Activated CD4-positive, alpha-beta T cell treated with anti-CD3 and anti-CD28 coated beads for 36 hours (primary cell): ENCODE measurements at regions of chr2 and their contacts with region 1.

Region 1: DNA sequence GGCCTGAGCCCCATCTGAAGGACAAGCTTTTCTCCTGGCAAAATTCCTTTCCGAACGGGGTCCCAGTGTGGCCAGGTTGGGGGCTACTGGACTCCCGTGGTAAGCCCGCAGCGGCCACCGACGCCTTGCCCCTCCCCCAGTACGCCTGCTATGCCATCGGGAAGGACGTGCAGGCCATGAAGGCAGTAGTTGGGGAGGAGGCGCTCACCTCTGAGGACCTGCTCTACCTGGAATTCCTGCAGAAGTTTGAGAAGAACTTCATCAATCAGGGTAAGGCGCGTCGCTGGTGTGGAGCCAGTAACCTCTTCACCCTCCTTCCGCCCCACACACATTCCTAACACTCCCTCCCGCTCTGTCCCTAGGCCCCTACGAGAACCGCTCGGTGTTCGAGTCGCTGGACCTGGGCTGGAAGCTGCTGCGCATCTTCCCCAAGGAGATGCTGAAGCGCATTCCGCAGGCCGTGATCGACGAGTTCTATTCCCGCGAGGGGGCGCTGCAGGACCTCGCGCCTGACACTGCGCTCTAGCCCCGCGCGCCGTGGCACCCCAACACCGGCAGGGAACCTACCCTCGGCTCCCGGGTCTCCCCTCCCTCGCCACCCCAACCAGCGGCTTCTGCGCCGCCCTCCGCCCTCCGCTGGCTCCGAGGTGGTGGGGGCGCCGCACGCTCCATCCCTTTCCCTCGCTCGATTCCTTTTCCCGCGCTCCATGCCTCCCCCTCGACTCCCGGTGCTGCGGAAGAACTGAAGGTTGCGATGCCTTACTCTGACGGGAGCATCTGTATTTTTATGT is 13.6 kb upstream of the ANKRD53 start:
- DNase-seq: peak; percentile 91
- ATAC-seq: peak; percentile 98
- H3K4me3 Mint-ChIP-seq: peak overlapping the region; percentile 77
- H3K27ac Mint-ChIP-seq: no peak overlapping the region
- H3K4me1 Mint-ChIP-seq: peaks cover 4% of the 10 kb centered on the region
- H3K27me3 Mint-ChIP-seq: peaks cover 16% of the 10 kb centered on the region

Region 2: GRCh38 chr2:70977605-70978205 is 12.9 kb after region 1 on chr2:
- CTCF ChIA-PET with region 1: interaction called, 35 read pairs
- POLR2A ChIA-PET with region 1: no interaction called
- intact Hi-C with region 1: loop called in 1 of 2 experiments (anchors 1 kb)
- DNase-seq: peak; percentile 60
- ATAC-seq: peak; percentile 56
- H3K4me3 Mint-ChIP-seq: peak overlapping the region; percentile 54
- H3K27ac Mint-ChIP-seq: peak overlapping the region; percentile 60
- H3K4me1 Mint-ChIP-seq: peaks cover 17% of the 10 kb centered on the region
- H3K27me3 Mint-ChIP-seq: no peaks in the 10 kb centered on the region

Region 3: DNA sequence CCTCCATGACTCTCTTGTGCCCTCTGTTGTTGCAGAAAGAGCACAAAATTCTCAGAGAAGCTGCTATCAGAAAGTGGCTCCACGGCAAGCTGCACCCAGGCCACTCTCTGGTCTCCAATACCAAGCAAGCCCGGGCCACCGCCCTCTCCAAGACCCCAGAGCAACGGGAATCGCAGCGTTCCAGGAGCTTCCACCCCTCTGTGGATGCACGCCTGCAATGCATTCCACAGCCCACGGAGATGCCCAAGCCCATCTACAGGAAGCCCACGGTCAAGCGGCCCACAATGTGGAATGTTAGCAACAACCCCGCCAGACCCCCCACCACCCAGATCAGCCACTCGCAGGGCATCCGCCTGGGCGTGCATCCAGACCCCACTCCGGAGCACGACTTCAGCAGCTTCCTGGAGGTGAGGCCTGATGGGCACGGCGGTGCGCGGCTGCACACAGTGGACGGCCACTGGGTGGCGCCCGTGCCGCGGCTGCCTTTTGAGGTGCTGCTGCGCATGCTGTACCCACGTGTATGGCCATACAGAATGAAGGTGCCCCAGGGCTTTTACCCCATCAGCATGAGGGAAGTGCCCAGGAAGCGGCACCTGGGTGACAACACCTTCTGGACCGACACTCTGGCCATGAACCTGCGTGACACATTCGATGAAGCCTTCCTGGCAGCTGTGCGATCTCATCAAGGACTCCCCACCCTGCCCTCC is 19.9 kb after region 1 on chr2:
- CTCF ChIA-PET with region 1: interaction called, 35 read pairs
- POLR2A ChIA-PET with region 1: no interaction called
- intact Hi-C with region 1: loop called in 1 of 2 experiments (anchors 2 kb)
- DNase-seq: peak; percentile 92
- ATAC-seq: peak; percentile 100
- H3K4me3 Mint-ChIP-seq: no peak overlapping the region
- H3K27ac Mint-ChIP-seq: no peak overlapping the region
- H3K4me1 Mint-ChIP-seq: peaks cover 12% of the 10 kb centered on the region
- H3K27me3 Mint-ChIP-seq: no peaks in the 10 kb centered on the region

Region 4: GRCh38 chr2:71000780-71001591 is 36.2 kb after region 1 on chr2:
- CTCF ChIA-PET with region 1: interaction called, 44 read pairs
- POLR2A ChIA-PET with region 1: no interaction called
- intact Hi-C with region 1: loop called (anchors 1 kb)
- DNase-seq: peak; percentile 91
- ATAC-seq: peak; percentile 97
- H3K4me3 Mint-ChIP-seq: peak overlapping the region; percentile 77
- H3K27ac Mint-ChIP-seq: peak overlapping the region; percentile 85
- H3K4me1 Mint-ChIP-seq: peaks cover 13% of the 10 kb centered on the region
- H3K27me3 Mint-ChIP-seq: no peaks in the 10 kb centered on the region

Region 5: DNA sequence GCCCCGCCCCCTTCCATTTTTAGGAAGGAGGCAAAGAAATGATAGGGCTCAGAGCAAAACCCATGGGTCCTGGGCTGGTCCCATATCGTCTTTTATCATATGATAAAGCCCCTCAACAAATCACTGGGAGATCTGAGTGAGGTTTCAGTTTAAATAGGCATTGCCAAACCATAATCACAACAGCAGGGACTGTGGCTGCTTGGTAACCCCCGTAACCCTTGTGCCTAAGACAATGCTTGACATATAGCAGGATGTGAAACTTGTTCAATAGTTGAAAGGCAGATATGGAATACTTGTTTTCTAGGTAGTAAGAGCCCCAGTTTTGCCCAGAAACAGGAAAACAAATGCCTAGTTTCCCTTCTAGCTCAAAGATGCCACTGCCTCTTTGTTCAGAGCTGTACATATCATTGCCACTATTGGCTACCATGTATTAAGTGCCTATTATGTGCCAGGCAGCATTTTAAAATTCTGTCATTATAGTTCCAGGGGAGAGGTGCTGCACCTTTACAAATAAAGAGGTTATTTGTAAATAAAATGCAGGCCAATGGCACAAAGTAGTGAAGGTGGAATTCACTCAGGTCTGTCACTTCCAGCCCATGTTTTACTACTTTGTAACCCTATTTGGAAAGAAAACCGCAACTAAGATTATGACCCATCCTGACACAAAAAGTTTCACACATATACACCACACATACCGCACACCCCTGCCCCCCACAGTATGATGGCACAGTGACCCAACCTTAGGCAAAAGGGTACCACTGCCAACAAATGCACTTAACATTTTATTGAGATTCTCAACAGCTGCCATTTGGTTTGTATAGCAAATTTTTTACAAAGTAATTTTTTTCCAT is 117.8 kb after region 1 on chr2:
- CTCF ChIA-PET with region 1: no interaction called
- POLR2A ChIA-PET with region 1: no interaction called
- intact Hi-C with region 1: no loop called
- DNase-seq: peak; percentile 85
- ATAC-seq: peak; percentile 90
- H3K4me3 Mint-ChIP-seq: no peak overlapping the region
- H3K27ac Mint-ChIP-seq: peak overlapping the region; percentile 34
- H3K4me1 Mint-ChIP-seq: peaks cover 19% of the 10 kb centered on the region
- H3K27me3 Mint-ChIP-seq: peaks cover 7% of the 10 kb centered on the region